CD4-positive, alpha-beta T cell (primary cell): ENCODE measurements at regions of chr7 and their contacts with region 1.

Region 1: DNA sequence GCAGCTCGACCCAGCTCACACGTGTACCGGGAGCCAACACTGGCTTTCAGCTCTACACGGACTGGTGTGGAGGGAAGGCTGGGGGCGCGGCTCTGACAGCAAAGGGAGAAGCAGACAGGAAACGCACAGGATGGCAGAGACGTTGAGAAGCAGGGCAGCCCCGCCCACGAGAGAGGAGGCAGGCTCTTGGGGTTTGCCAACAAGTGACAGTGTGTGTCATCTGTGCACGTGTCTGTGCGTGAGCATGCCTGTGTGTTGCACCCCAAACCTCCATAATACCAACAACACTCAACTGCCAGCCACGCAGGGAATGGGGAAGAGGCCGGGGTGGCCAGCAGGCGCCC is 64.4 kb upstream of the PDGFA start:
- DNase-seq: peak; percentile 85 to 96 (median 91)
- ATAC-seq: peak; percentile 97
- H3K4me3 ChIP-seq: peak overlapping the region; percentile 72
- H3K4me3 Mint-ChIP-seq: peak overlapping the region; percentile 86
- H3K27ac ChIP-seq: peak overlapping the region; percentile 64 to 86
- H3K27ac Mint-ChIP-seq: peak overlapping the region; percentile 95
- H3K4me1 ChIP-seq: peaks cover 30% of the 10 kb centered on the region
- H3K4me1 Mint-ChIP-seq: peaks cover 44% of the 10 kb centered on the region
- H3K27me3 ChIP-seq: no peaks in the 10 kb centered on the region
- H3K27me3 Mint-ChIP-seq: no peaks in the 10 kb centered on the region
- CTCF ChIP-seq: no peak

Region 2: DNA sequence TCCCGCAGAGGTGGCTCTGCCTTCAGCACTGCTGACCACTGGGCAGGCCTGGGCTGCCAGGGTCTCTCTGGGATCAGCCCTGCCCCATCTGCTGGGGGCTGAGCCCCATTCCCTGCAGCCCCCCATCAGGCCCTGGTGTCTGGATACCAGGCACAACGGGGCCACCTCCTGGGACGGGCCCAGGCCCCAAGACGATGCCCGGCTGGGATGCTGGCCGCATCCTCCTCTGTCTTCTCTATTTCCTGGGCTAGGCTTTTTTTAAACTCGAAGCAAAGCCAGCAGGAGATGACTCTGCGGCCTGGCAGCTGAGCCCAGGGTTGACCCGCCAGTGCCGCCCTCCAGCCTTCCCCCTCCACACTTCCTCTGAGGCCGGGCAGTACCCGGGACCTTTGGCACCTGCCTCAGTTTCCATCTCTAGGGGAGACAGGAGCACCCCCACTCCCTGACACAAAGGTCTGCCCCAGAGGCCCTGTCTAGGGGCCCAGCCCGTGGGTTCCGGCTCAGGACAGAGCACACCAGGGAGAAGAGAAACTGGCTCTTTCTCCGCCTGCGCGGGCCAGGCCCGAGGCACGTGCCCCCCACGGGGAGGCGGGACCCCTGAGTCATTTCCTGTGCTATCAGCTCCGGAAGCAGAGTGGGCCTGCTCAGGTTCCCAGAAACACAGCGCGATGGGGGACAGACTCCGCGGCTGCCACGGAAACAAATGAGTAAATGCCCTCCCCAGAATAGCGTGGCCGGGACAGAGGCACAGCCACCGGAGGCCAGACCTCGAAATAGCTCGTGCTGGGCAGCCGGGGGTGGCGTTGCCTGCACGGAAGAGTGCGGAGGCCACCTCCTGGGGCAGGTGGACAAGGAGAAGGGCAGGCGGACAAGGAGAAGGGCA is 20.1 kb after region 1 on chr7:
- CTCF ChIA-PET with region 1: interaction called, 4 read pairs
- POLR2A ChIA-PET with region 1: interaction called, 11 read pairs
- intact Hi-C with region 1: loop called (anchors 1 kb)
- DNase-seq: peak; percentile 80 to 97 (median 91)
- ATAC-seq: peak; percentile 84
- H3K4me3 ChIP-seq: peak overlapping the region; percentile 58
- H3K4me3 Mint-ChIP-seq: peak overlapping the region; percentile 88
- H3K27ac ChIP-seq: peak overlapping the region; percentile 96 to 97
- H3K27ac Mint-ChIP-seq: peak overlapping the region; percentile 98
- H3K4me1 ChIP-seq: peaks cover 83% of the 10 kb centered on the region
- H3K4me1 Mint-ChIP-seq: peaks cover 62% of the 10 kb centered on the region
- H3K27me3 ChIP-seq: no peaks in the 10 kb centered on the region
- H3K27me3 Mint-ChIP-seq: no peaks in the 10 kb centered on the region
- CTCF ChIP-seq: no peak

Region 3: DNA sequence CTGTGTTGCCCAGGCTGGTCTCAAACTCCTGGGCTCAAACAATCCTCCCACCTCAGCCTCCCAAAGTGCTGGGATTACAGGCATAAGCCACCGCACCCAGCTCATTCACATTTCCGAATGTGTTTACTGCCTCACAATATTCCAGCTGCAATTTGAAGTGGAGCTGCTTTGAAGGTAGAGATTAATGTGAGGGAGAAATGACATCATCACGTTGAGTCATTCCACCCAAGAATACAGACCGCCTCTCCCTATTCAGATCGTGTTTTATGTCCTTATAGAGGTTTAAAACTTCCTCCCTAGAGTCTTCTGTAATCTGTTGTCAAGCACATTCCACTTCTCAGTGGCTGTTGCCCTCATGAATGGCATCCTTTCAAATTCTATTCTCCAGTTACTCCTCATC is 36.0 kb after region 1 on chr7:
- CTCF ChIA-PET with region 1: no interaction called
- POLR2A ChIA-PET with region 1: interaction called, 22 read pairs
- intact Hi-C with region 1: loop called (anchors 1 to 5 kb)
- DNase-seq: no peak
- ATAC-seq: no peak
- H3K4me3 ChIP-seq: no peak overlapping the region
- H3K4me3 Mint-ChIP-seq: no peak overlapping the region
- H3K27ac ChIP-seq: no peak overlapping the region
- H3K27ac Mint-ChIP-seq: peak overlapping the region; percentile 97
- H3K4me1 ChIP-seq: peaks cover 50% of the 10 kb centered on the region
- H3K4me1 Mint-ChIP-seq: peaks cover 51% of the 10 kb centered on the region
- H3K27me3 ChIP-seq: no peaks in the 10 kb centered on the region
- H3K27me3 Mint-ChIP-seq: no peaks in the 10 kb centered on the region
- CTCF ChIP-seq: no peak

Region 4: DNA sequence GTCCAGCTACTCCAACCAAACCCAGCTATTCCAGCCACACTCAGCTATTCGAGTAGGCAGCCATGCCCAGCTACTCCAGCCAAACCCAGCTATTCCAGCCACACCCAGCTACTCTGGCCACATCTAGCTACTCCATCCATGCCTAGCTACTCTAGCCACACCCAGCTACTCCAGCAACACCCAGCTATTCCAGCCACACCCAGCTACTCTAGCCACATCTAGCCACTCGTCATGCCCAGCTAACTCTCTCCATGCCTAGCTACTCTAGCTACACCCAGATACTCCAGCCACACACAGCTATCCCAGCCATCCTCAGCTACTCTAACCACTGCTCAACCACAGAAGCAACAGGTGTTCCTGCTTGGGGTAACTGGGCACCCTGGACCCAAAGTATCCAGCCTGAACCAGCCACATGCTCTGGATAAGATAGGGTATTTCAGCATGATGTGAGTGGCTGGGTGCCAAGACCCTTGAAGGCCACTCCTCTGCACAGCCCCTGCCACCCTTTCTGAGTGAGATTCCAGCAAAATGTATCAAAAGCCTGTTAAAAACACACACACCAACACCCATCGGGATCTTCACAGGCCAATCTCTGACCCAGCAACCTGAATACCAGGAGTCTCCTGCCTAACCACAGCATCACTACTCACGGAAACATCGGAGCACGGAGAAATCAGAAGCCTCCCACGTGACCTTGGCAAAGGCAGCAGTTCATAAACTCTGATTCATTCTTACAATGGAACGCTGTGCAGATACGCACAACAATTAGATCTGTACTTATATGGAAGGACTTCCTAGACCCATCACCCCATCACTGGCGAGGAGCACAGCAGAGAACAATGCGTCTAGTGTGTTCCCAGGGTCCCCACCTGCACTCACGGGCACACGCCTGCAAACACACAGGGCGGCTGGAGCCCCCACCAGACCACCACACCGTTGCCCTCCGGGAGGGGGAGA is 90.6 kb after region 1 on chr7:
- CTCF ChIA-PET with region 1: no interaction called
- POLR2A ChIA-PET with region 1: no interaction called
- intact Hi-C with region 1: no loop called
- DNase-seq: no peak
- ATAC-seq: no peak
- H3K4me3 ChIP-seq: no peak overlapping the region
- H3K4me3 Mint-ChIP-seq: no peak overlapping the region
- H3K27ac ChIP-seq: no peak overlapping the region
- H3K27ac Mint-ChIP-seq: peak overlapping the region; percentile 47
- H3K4me1 ChIP-seq: no peaks in the 10 kb centered on the region
- H3K4me1 Mint-ChIP-seq: no peaks in the 10 kb centered on the region
- H3K27me3 ChIP-seq: no peaks in the 10 kb centered on the region
- H3K27me3 Mint-ChIP-seq: no peaks in the 10 kb centered on the region
- CTCF ChIP-seq: no peak

Region 5: GRCh38 chr7:726084-726853 is 142.2 kb after region 1 on chr7 and contains the start of gene DNAAF5:
- CTCF ChIA-PET with region 1: no interaction called
- POLR2A ChIA-PET with region 1: interaction called, 4 read pairs
- intact Hi-C with region 1: loop called (anchors 1 to 5 kb)
- DNase-seq: peak; percentile 74 to 92 (median 82)
- ATAC-seq: peak; percentile 89
- H3K4me3 ChIP-seq: peak within 1 kb of the TSS; percentile 73
- H3K4me3 Mint-ChIP-seq: peak within 1 kb of the TSS; percentile 86
- H3K27ac ChIP-seq: peak within 1 kb of the TSS; percentile 62 to 64
- H3K27ac Mint-ChIP-seq: peak within 1 kb of the TSS; percentile 36
- H3K4me1 ChIP-seq: peaks cover 21% of the 10 kb centered on the region
- H3K4me1 Mint-ChIP-seq: peaks cover 26% of the 10 kb centered on the region
- H3K27me3 ChIP-seq: no peaks in the 10 kb centered on the region
- H3K27me3 Mint-ChIP-seq: no peaks in the 10 kb centered on the region
- CTCF ChIP-seq: no peak
- total RNA-seq, gene DNAAF5: 4.8 to 6.1 TPM

Region 6: DNA sequence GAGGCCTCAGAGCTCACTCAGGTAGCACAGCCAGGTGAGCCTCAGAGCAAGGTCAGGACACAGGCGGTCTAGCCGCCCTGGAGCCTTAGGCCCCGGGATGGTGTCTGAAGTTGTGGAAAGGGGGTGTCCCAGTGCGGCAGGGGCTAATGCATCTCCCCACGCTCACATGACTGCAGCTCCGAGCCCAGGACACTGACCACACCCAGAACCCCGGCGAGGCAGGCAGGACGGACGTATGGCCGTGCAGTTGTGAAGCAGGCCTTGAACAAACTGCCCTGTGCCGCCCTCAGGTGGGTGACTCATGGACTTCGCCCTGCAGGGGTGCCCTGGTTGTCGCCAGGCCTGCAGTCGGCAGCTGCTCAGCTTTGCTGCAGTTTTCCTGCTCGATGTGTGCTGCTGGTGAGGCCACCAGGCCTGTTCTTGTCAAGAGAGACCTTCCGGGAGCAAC is 148.0 kb after region 1 on chr7:
- CTCF ChIA-PET with region 1: no interaction called
- POLR2A ChIA-PET with region 1: interaction called, 4 read pairs
- intact Hi-C with region 1: loop called (anchors 2 to 5 kb)
- DNase-seq: peak in 6 of 14 experiments; percentile 9 to 49 (median 16)
- ATAC-seq: peak; percentile 37
- H3K4me3 ChIP-seq: no peak overlapping the region
- H3K4me3 Mint-ChIP-seq: no peak overlapping the region
- H3K27ac ChIP-seq: no peak overlapping the region
- H3K27ac Mint-ChIP-seq: no peak overlapping the region
- H3K4me1 ChIP-seq: peaks cover 11% of the 10 kb centered on the region
- H3K4me1 Mint-ChIP-seq: peaks cover 17% of the 10 kb centered on the region
- H3K27me3 ChIP-seq: no peaks in the 10 kb centered on the region
- H3K27me3 Mint-ChIP-seq: no peaks in the 10 kb centered on the region
- CTCF ChIP-seq: no peak

Region 7: DNA sequence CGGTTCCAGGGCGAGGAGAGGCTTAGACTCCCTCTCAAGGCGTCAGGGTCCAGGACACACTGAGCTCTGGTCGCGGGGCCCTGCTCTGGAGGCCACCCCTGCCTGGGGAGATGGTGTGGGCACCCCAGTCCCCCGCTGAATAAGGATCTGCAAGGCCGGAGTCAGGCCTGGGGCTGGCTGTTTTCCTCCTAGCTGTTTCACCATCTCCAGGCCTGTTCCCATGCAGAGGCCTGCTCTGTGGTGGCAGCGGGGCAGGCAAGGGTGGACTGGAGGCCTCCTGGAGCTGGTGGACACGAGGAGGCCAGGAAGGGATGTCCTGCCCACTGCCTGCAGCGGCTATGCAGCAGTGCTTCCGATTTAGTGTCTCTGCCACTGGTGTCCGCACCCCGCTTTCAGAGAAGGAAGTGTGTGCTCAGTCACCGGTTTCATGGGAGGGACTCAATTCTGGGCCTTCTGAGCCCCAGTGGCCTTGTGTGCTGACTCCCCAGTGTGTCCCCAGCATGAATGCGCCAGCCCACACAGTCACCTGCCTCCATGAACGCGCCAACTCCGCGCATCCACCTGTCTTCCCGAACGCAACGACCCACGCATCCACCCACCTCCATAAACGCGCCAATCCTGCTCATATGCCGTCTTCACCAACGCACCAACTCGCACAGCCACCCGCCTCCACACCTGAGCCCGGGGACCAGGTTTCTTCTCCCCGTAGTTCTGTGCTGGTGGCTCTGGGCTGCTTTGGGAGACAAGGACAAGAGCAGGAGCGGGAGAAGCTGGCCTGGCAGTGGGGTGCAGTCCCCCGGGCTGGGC is 445.7 kb after region 1 on chr7:
- CTCF ChIA-PET with region 1: no interaction called
- POLR2A ChIA-PET with region 1: no interaction called
- intact Hi-C with region 1: no loop called
- DNase-seq: peak in 1 of 14 experiments; percentile 24
- ATAC-seq: no peak
- H3K4me3 ChIP-seq: no peak overlapping the region
- H3K4me3 Mint-ChIP-seq: peak overlapping the region; percentile 93
- H3K27ac ChIP-seq: no peak overlapping the region
- H3K27ac Mint-ChIP-seq: peak overlapping the region; percentile 72
- H3K4me1 ChIP-seq: peaks cover 74% of the 10 kb centered on the region
- H3K4me1 Mint-ChIP-seq: peaks cover 58% of the 10 kb centered on the region
- H3K27me3 ChIP-seq: no peaks in the 10 kb centered on the region
- H3K27me3 Mint-ChIP-seq: no peaks in the 10 kb centered on the region
- CTCF ChIP-seq: no peak